ENCODE measurements at regions of chr11 and their contacts with region 1.

Region 1: GRCh38 chr11:12417728-12418611 is 40.6 kb downstream of the PARVA start:
- DNase-seq: peak; percentile 89
- H3K4me3 ChIP-seq: no peak overlapping the region
- H3K27ac ChIP-seq: peak overlapping the region; percentile 80 to 100 (median 98)
- H3K4me1 ChIP-seq: peaks cover 34 to 94% (median 83%) of the 10 kb centered on the region in 4 donors
- H3K27me3 ChIP-seq: no peaks in the 10 kb centered on the region
- CTCF ChIP-seq: no peak
- EP300 ChIP-seq: no peak
- POLR2A ChIP-seq: no peak

Region 2: DNA sequence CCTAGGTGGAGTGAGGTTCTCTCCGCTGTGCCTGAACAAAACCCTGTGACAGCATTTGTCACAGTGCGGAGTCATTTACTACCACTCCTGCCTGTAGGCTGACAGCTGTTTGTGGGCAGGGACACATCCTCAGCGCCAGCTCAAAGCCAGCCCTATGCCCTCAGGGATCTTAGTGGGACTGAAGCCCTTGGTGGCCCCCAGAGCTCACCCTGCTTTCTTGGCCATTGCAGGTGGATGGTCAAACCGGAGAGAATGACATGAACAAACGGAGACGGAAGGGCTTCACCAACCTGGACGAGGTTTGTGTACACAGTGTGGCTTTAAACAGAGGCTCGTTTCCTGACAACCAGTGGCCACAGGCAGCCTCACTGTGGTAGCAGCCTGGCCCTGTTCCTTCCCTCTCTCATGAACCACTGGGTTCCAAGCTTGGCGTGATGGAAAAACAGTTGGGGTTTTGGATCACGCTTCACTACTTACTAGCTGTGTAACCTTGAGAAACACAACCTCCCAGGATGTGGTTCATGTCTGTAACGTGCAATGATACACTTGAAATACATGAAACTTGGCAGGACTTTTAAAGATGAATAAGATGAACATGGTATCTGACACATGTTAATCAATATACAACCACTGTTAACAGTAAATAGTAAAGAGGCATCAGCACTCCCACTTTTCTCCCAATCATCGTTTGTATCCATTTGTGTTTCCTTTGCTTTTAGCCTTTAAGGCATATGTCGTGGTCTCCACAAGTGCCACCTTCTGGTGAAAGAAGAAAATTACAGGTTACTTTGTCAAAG is 181.8 kb before region 1 on chr11:
- intact Hi-C with region 1: no loop called
- DNase-seq: no peak
- H3K4me3 ChIP-seq: no peak overlapping the region
- H3K27ac ChIP-seq: peak overlapping the region; percentile 82 to 89 (median 88)
- H3K4me1 ChIP-seq: peaks cover 18 to 98% (median 91%) of the 10 kb centered on the region in 4 donors
- H3K27me3 ChIP-seq: no peaks in the 10 kb centered on the region
- CTCF ChIP-seq: peak; percentile 52 to 73 (median 72)
- EP300 ChIP-seq: no peak
- POLR2A ChIP-seq: no peak

Region 3: GRCh38 chr11:12540913-12541582 is 123.1 kb after region 1 on chr11:
- intact Hi-C with region 1: loop called (anchors 5 kb)
- DNase-seq: peak; percentile 92
- H3K4me3 ChIP-seq: no peak overlapping the region
- H3K27ac ChIP-seq: peak overlapping the region; percentile 72 to 85 (median 83)
- H3K4me1 ChIP-seq: peaks cover 19 to 63% (median 57%) of the 10 kb centered on the region in 4 donors
- H3K27me3 ChIP-seq: no peaks in the 10 kb centered on the region
- CTCF ChIP-seq: peak in 1 of 3 experiments; percentile 61
- EP300 ChIP-seq: no peak
- POLR2A ChIP-seq: no peak

Measured in esophagus muscularis mucosa (tissue), 4 donors.